ENCODE measurements at regions of chr4 and their contacts with region 1.

Region 1: DNA sequence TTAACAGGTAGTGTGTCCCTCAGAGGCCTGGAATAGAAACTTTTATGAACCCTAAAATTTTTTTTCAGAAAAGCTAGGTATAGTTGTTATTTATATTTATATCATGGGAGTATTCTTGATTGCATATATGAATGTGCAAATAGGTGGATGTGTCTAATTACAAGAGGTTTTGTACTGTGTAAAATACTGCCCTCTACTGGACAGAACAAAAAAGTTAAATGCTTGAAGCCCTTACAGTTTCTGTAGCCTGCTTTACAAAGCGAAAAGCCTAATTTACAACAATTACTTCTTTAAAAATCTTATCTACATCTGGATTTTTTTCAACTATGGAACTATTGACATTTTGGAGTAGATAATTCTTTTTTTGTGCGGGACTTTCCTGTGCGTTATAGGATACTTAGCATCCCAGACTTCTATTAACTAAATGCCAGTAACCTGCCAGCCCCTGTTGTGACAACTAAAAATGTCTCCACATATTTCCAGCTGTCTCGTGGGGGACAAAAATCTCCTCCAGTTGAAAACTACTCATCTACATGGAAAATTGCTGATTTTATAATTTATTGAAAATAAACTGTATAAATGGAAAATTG is 35.1 kb downstream of the ENPEP start:
- DNase-seq: peak; percentile 67
- ATAC-seq: peak; percentile 75
- H3K4me3 ChIP-seq: no peak overlapping the region
- H3K27ac ChIP-seq: no peak overlapping the region
- H3K4me1 ChIP-seq: no peaks in the 10 kb centered on the region
- H3K27me3 ChIP-seq: no peaks in the 10 kb centered on the region
- CTCF ChIP-seq: peak; percentile 67
- POLR2A ChIP-seq: no peak
- RAD21 ChIP-seq: peak; percentile 60

Region 2: DNA sequence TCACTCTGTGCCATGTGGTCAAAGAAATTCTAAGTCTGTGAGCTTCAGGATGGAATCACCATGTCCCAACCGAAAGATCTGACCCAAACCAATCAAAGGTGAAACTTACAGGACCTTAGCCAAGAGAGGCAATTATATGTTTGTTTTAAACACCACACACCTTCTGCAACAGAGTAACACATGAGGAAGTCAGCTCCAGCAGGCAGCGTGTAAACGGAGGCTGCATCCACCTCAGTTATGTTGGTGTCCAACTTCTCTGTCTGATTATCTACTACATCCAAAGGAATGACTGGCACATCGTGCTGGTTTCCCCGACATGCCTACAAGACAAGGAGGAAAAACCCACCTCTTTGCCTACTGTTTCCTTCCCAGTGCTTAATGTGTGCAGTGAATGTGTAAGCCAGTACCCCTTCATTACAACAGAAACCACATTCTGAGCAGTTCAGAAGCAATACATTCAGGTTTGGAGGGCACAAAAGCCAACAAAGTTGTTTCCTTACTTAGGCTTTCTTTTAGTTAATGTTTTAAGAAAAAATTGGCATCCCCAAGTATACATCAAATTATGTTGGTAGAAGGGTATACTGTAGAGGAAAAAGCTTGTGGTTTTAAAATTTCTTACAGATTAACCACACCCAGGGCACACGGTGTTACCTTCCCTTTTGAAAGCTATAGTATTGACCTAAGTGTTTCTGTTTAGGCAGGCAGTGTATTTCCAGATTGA is 820.2 kb before region 1 on chr4:
- CTCF ChIA-PET with region 1: no interaction called
- POLR2A ChIA-PET with region 1: no interaction called
- dilution Hi-C with region 1: no loop called
- in situ Hi-C with region 1: no loop called
- intact Hi-C with region 1: no loop called
- DNase-seq: no peak
- ATAC-seq: no peak
- H3K4me3 ChIP-seq: no peak overlapping the region
- H3K27ac ChIP-seq: no peak overlapping the region
- H3K4me1 ChIP-seq: no peaks in the 10 kb centered on the region
- H3K27me3 ChIP-seq: no peaks in the 10 kb centered on the region
- CTCF ChIP-seq: no peak
- POLR2A ChIP-seq: no peak
- RAD21 ChIP-seq: no peak

Region 3: DNA sequence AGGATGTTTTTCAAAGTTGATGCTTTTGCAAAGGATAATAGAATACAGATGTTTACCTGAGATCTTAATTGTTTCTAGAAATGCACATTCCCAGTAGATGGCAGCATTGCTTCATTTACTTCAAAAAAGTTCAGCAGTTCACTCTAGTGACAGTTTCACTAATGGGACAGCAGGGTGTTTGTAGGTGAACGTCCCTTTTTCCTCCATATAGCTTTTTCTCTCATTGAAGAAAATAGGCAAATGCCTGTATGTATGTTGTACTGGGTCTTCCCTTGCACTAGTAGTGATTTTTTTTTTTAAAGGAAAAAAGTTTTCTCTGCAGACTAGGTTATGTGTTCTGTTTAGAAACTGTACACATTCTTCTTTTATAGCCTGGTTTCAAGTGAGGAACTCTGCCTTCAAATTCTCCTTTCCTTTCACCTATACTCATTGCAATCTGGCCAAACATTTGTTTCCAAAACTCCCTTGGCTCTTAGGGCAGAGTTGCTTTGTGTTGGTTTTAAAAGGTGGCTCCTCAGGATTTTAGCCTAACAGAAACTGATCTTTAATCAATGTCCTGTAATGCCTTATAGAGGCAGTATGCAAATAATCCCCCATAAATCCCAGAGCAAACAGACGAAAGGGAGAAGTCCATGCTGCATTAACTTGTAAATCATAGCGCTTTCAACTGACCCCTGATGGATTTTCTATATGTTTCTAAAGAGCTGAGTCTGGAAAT is 512.0 kb before region 1 on chr4:
- CTCF ChIA-PET with region 1: interaction called, 52 read pairs
- POLR2A ChIA-PET with region 1: no interaction called
- dilution Hi-C with region 1: no loop called
- in situ Hi-C with region 1: loop called (anchors 5 kb)
- intact Hi-C with region 1: loop called (anchors 1 kb)
- DNase-seq: peak; percentile 61
- ATAC-seq: peak; percentile 73
- H3K4me3 ChIP-seq: no peak overlapping the region
- H3K27ac ChIP-seq: no peak overlapping the region
- H3K4me1 ChIP-seq: no peaks in the 10 kb centered on the region
- H3K27me3 ChIP-seq: peaks cover 2% of the 10 kb centered on the region; the same call in 1 of the 2 replicates
- CTCF ChIP-seq: peak; percentile 91
- POLR2A ChIP-seq: no peak
- RAD21 ChIP-seq: peak; percentile 86

Region 4: GRCh38 chr4:110049951-110050925 is 460.8 kb before region 1 on chr4:
- CTCF ChIA-PET with region 1: interaction called, 4 read pairs
- POLR2A ChIA-PET with region 1: no interaction called
- dilution Hi-C with region 1: no loop called
- in situ Hi-C with region 1: no loop called
- intact Hi-C with region 1: loop called (anchors 2 kb)
- DNase-seq: peak; percentile 52
- ATAC-seq: peak; percentile 78
- H3K4me3 ChIP-seq: no peak overlapping the region
- H3K27ac ChIP-seq: no peak overlapping the region
- H3K4me1 ChIP-seq: peaks cover 3% of the 10 kb centered on the region; the same call in 1 of the 2 replicates
- H3K27me3 ChIP-seq: no peaks in the 10 kb centered on the region
- CTCF ChIP-seq: peak; percentile 83
- POLR2A ChIP-seq: no peak
- RAD21 ChIP-seq: peak; percentile 84

Region 5: DNA sequence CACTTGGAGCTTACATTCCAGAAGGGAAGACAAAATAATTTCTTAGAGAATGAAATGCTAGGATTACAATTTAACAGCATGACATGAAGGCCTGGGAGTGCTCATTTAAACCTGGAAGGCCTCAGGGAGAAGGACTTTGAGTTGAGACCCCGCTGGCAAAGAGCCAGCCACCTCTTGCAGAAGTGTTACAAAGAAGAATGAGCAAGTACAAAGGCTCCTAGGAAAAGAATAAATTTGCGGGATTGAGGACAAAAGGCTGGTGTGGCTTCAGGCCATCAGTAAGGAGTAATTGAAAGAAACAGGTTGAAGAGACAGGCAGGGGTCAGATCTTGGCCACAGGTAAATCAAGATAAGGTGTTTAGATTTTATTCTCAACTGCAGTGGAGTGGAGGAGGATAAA is 309.5 kb before region 1 on chr4:
- CTCF ChIA-PET with region 1: no interaction called
- POLR2A ChIA-PET with region 1: interaction called, 3 read pairs
- dilution Hi-C with region 1: no loop called
- in situ Hi-C with region 1: loop called (anchors 10 kb)
- intact Hi-C with region 1: loop called (anchors 5 kb)
- DNase-seq: no peak
- ATAC-seq: no peak
- H3K4me3 ChIP-seq: no peak overlapping the region
- H3K27ac ChIP-seq: no peak overlapping the region
- H3K4me1 ChIP-seq: no peaks in the 10 kb centered on the region
- H3K27me3 ChIP-seq: no peaks in the 10 kb centered on the region; the same call in 1 of the 2 replicates
- CTCF ChIP-seq: no peak
- POLR2A ChIP-seq: no peak
- RAD21 ChIP-seq: no peak

Region 6: GRCh38 chr4:110344162-110344561 is 166.9 kb before region 1 on chr4:
- CTCF ChIA-PET with region 1: no interaction called
- POLR2A ChIA-PET with region 1: no interaction called
- dilution Hi-C with region 1: no loop called
- in situ Hi-C with region 1: no loop called
- intact Hi-C with region 1: loop called (anchors 5 kb)
- DNase-seq: no peak
- ATAC-seq: no peak
- H3K4me3 ChIP-seq: no peak overlapping the region
- H3K27ac ChIP-seq: no peak overlapping the region
- H3K4me1 ChIP-seq: no peaks in the 10 kb centered on the region
- H3K27me3 ChIP-seq: no peaks in the 10 kb centered on the region
- CTCF ChIP-seq: peak; percentile 28; the same call in 1 of the 2 replicates
- POLR2A ChIP-seq: no peak
- RAD21 ChIP-seq: peak; percentile 34; the same call in 1 of the 2 replicates